Prostate gland (tissue), 2 donors: ENCODE measurements at regions of chr13 and their contacts with region 1.

Region 1: GRCh38 chr13:114132419-114133121 is at the start of gene RASA3:
- DNase-seq: peak; percentile 61
- H3K4me3 ChIP-seq: peak within 1 kb of the TSS; percentile 60 to 79
- H3K27ac ChIP-seq: peak within 1 kb of the TSS; percentile 61 to 69
- H3K4me1 ChIP-seq: peaks cover 5% of the 10 kb centered on the region
- H3K27me3 ChIP-seq: no peaks in the 10 kb centered on the region
- CTCF ChIP-seq: no peak
- POLR2A ChIP-seq: peak; percentile 42
- total RNA-seq, gene RASA3: 8.6 to 12.5 TPM

Region 2: GRCh38 chr13:113976711-113977684 is 155.6 kb before region 1 on chr13:
- intact Hi-C with region 1: loop called (anchors 10 kb)
- DNase-seq: no peak
- H3K4me3 ChIP-seq: no peak overlapping the region
- H3K27ac ChIP-seq: no peak overlapping the region
- H3K4me1 ChIP-seq: no peaks in the 10 kb centered on the region
- H3K27me3 ChIP-seq: no peaks in the 10 kb centered on the region
- CTCF ChIP-seq: no peak
- POLR2A ChIP-seq: no peak

Region 3: DNA sequence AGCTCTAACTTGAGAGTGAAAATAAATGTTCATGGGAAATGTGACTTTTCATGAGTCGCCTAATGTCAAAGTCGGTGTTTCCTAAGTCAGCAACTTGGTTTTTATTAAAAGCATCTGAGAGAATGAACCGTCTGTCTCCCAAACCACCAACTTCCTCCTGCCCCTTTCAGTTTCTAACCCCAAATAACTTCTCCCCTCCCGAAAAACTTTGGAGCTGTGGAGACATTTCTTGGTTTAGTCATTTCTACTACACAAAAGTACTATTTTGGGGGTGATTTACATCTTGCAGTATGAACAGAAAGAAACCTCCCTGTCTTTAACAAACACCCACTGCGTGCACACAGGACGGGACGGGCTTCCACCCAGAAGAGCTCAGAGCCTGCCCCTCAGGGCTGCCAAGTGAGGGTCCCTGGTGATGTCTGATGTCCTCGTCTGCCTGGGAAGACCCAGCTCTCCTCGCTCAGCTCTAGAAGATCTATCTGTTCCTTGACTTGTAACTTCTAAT is 65.1 kb before region 1 on chr13:
- intact Hi-C with region 1: loop called (anchors 2 kb)
- DNase-seq: no peak
- H3K4me3 ChIP-seq: no peak overlapping the region
- H3K27ac ChIP-seq: peak overlapping the region; percentile 81
- H3K4me1 ChIP-seq: peaks cover 7% of the 10 kb centered on the region
- H3K27me3 ChIP-seq: no peaks in the 10 kb centered on the region
- CTCF ChIP-seq: no peak
- POLR2A ChIP-seq: no peak